Dorsolateral prefrontal cortex (tissue), 120 donors: ENCODE measurements at regions of chr12 and their contacts with region 1.

Region 1: DNA sequence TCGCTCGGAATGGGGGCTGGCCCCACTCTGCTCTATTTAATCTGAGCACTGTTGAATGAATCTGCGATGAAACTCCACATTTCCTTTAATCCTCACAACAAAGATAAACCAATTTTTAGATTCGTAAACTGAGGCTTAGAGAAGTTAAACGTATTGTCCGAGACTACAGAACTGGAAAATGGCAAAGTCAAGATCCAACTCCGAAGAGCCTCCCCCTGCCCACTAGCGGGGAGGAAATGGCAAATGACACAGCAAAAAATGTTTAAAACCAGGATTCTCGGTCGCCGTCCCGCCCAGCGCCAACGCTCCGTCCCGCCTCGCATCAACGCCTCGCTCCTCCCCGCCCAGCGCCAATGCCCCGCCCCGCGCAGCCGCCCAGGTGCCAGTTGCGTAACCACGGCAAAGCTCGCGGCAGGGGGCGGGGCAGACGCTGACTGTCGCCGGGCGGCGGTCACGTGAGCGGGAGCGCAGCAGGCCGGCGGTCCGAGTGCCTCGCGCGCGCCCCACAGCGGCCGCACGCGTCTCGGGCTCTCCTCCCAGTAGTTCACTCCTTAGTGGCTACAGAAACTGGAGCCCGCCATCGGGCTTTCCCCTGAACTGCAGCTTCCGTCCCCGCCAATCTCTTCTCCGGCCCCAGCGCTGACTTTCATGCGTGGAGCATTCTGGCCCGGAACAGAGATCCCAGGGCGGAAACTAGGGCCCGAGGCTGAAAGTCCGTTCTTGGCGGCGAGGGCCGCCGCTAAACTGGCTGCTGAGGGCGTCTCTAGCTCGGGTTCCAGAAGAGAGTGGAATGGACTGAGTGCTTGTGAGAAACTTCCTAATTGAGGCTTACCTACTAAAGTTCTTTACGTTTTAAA is 13.6 kb upstream of the LRRC23 start:
- DNase-seq: peak; percentile 96 to 99 (median 98)
- H3K4me3 ChIP-seq: peak overlapping the region; percentile 34 to 88 (median 65)
- H3K27ac ChIP-seq: peak overlapping the region; percentile 85 to 100 (median 97)
- H3K27me3 ChIP-seq: no peaks in the 10 kb centered on the region
- CTCF ChIP-seq: peak; percentile 84 to 99 (median 98)

Region 2: DNA sequence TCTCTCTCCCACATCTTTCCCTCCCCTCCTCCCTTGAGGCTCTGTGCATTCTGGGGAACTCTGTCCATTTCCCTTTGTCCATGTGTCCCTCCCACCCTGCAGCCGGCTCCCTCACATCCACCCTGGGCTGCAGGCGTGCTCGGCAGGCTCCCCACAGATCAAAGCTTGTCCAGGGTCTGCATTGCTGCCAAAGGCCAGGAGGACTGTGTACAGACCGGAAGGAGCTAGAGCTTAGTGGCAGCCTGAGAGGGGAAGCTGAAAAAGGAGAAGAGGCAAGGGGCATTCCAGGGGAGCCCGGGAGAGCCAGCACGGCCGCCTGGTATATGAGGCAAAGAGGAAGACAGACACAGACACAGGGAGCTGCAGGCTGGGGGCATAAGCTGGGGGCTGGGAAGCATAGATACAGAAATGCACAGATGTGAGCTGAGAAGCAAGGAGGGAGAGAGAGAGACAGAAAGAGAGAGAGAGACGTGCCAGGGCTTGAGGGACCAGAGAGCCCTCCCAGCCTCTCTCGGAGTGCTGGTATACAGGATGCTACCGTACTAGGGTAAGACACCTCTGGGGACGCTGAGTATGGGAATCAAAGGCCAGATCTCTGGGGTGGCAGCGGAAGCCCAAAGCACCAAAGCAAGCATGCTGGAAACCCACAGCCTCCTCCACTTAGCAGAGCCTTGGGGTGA is 98.4 kb before region 1 on chr12:
- intact Hi-C with region 1: no loop called
- DNase-seq: peak in 4 of 10 donors; percentile 35 to 62 (median 42)
- H3K4me3 ChIP-seq: peak overlapping the region in 49 of 59 donors; percentile 1 to 51 (median 31)
- H3K27ac ChIP-seq: peak overlapping the region in 58 of 59 donors; percentile 24 to 90 (median 76)
- H3K27me3 ChIP-seq: no peaks in the 10 kb centered on the region
- CTCF ChIP-seq: no peak

Region 3: DNA sequence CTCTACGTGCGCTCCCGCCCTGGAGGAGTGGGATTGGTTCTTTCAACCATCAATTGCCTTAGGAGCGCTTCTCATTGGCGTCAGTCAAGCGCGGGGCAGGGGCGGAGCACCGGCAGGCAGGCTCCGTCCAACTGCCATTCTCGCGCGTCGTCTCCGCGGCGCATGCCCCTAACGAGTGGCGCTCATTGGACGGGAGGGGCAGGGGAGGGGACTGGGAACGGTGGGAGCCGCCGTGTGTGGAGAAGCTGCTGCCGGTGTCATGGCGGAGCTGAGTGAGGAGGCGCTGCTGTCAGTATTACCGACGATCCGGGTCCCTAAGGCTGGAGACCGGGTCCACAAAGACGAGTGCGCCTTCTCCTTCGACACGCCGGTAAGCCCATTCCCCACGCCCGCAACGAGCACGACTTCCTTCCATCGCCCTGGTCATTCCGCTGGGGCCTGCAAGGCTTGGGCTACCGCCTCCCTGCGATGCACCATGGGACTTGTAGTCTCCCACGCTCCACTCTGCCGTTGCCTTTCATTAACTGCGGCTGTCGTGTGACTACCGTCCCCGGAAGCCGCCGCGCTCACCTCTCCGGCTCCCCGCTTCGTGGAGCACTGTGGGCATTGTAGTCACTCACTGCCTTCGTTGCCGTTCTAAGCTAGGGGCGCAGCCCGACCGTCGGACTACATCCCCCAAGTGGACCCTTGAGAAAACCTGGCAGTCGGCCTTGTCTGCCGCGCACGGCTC is 38.9 kb before region 1 on chr12 and contains the start of gene USP5:
- intact Hi-C with region 1: loop called in 1 of 2 experiments (anchors 1 kb)
- DNase-seq: peak; percentile 98 to 100 (median 100)
- H3K4me3 ChIP-seq: peak within 1 kb of the TSS; percentile 61 to 98 (median 79)
- H3K27ac ChIP-seq: peak within 1 kb of the TSS; percentile 83 to 99 (median 95)
- H3K27me3 ChIP-seq: no peaks in the 10 kb centered on the region
- CTCF ChIP-seq: peak in 41 of 56 donors; percentile 7 to 58 (median 29)
- total RNA-seq, gene USP5: 77.3 to 191 (median 146) TPM

Region 4: GRCh38 chr12:6904280-6905278 is 13.6 kb after region 1 on chr12 and contains the start of gene LRRC23:
- intact Hi-C with region 1: loop called in 1 of 2 experiments (anchors 2 kb)
- DNase-seq: peak; percentile 97 to 99 (median 99)
- H3K4me3 ChIP-seq: peak within 1 kb of the TSS; percentile 55 to 99 (median 81)
- H3K27ac ChIP-seq: peak within 1 kb of the TSS; percentile 13 to 95 (median 87)
- H3K27me3 ChIP-seq: no peaks in the 10 kb centered on the region
- CTCF ChIP-seq: peak in 24 of 56 donors; percentile 8 to 54 (median 25)
- total RNA-seq, gene LRRC23: 16.3 to 32.4 (median 22.4) TPM